Transverse colon (tissue), 4 donors: ENCODE measurements at regions of chr1 and their contacts with region 1.

Region 1: GRCh38 chr1:87014281-87014680 is 99.8 kb downstream of the HS2ST1 start:
- DNase-seq: no peak
- H3K4me3 ChIP-seq: no peak overlapping the region
- H3K27ac ChIP-seq: no peak overlapping the region
- H3K4me1 ChIP-seq: no peaks in the 10 kb centered on the region
- H3K27me3 ChIP-seq: no peaks in the 10 kb centered on the region
- CTCF ChIP-seq: no peak
- EP300 ChIP-seq: no peak
- POLR2A ChIP-seq: no peak

Region 2: GRCh38 chr1:86696522-86696921 is 317.8 kb before region 1 on chr1:
- in situ Hi-C with region 1: no loop called
- intact Hi-C with region 1: no loop called
- DNase-seq: no peak
- H3K4me3 ChIP-seq: no peak overlapping the region
- H3K27ac ChIP-seq: no peak overlapping the region
- H3K4me1 ChIP-seq: no peaks in the 10 kb centered on the region
- H3K27me3 ChIP-seq: no peaks in the 10 kb centered on the region
- CTCF ChIP-seq: no peak
- EP300 ChIP-seq: no peak
- POLR2A ChIP-seq: no peak

Region 3: GRCh38 chr1:86714159-86714558 is 300.1 kb before region 1 on chr1:
- in situ Hi-C with region 1: no loop called
- intact Hi-C with region 1: no loop called
- DNase-seq: no peak
- H3K4me3 ChIP-seq: no peak overlapping the region
- H3K27ac ChIP-seq: no peak overlapping the region
- H3K4me1 ChIP-seq: peaks cover 12 to 67% (median 29%) of the 10 kb centered on the region in 4 donors
- H3K27me3 ChIP-seq: no peaks in the 10 kb centered on the region
- CTCF ChIP-seq: no peak
- EP300 ChIP-seq: no peak
- POLR2A ChIP-seq: no peak

Region 4: GRCh38 chr1:86779308-86780191 is 234.7 kb before region 1 on chr1:
- in situ Hi-C with region 1: no loop called
- intact Hi-C with region 1: no loop called
- DNase-seq: no peak
- H3K4me3 ChIP-seq: no peak overlapping the region
- H3K27ac ChIP-seq: no peak overlapping the region
- H3K4me1 ChIP-seq: peaks cover 0 to 6% (median 0%) of the 10 kb centered on the region in 4 donors
- H3K27me3 ChIP-seq: no peaks in the 10 kb centered on the region
- CTCF ChIP-seq: no peak
- EP300 ChIP-seq: no peak
- POLR2A ChIP-seq: no peak

Region 5: GRCh38 chr1:88490676-88491075 is 1476.4 kb after region 1 on chr1:
- in situ Hi-C with region 1: no loop called
- intact Hi-C with region 1: loop called (anchors 5 kb)
- DNase-seq: no peak
- H3K4me3 ChIP-seq: no peak overlapping the region
- H3K27ac ChIP-seq: no peak overlapping the region
- H3K4me1 ChIP-seq: no peaks in the 10 kb centered on the region
- H3K27me3 ChIP-seq: no peaks in the 10 kb centered on the region
- CTCF ChIP-seq: no peak
- EP300 ChIP-seq: no peak
- POLR2A ChIP-seq: no peak